Left ventricle myocardium inferior (tissue), 1 donor: ENCODE measurements at regions of chr5 and their contacts with region 1.

Region 1: GRCh38 chr5:59367791-59368394 is 525.6 kb downstream of the PDE4D start:
- DNase-seq: peak; percentile 26
- H3K4me3 ChIP-seq: no peak overlapping the region
- H3K27ac ChIP-seq: no peak overlapping the region
- H3K4me1 ChIP-seq: peaks cover 9% of the 10 kb centered on the region
- H3K27me3 ChIP-seq: no peaks in the 10 kb centered on the region
- CTCF ChIP-seq: peak; percentile 86

Region 2: DNA sequence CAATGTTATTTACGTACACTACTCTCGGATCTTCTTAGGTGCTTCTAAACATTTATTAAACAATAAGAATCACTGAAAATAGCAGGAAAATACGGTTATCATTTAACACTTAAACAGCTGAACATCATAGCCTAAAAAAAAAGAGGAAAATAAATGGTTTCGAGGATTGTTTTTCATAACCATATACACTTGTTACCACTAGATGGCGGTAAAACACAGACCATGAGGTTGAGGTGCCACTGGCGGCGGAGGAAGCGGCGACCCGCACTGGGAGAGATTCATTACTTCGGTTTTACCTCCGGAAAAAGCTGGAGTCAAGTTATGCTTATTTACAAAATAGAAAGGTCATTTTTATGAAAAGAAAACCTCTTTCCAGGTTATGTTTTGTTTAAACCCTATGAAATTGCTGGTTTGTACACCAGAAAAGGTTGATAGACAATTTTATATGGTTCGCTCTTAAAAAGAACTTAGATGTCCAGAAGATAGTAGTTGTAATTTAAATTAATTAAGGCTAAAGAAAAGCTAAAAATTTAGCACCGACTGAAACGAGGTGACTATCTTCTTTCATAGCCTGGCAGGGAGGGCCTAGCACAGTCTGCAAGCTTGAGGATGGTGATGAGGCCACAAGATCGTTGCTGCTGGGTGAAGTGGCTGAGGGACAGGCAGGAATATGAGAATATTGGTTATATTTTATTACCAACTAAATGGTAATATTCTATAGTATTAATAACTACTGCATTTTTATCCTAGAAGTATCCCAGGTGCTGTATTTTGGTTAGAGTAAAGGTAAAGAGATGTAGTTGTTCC is 179.3 kb before region 1 on chr5:
- intact Hi-C with region 1: loop called (anchors 5 kb)
- DNase-seq: peak; percentile 67
- H3K4me3 ChIP-seq: peak overlapping the region; percentile 55
- H3K27ac ChIP-seq: peak overlapping the region; percentile 59
- H3K4me1 ChIP-seq: peaks cover 31% of the 10 kb centered on the region
- H3K27me3 ChIP-seq: no peaks in the 10 kb centered on the region
- CTCF ChIP-seq: peak; percentile 86

Region 3: GRCh38 chr5:59222687-59223521 is 145.0 kb before region 1 on chr5:
- intact Hi-C with region 1: loop called (anchors 10 kb)
- DNase-seq: no peak
- H3K4me3 ChIP-seq: no peak overlapping the region
- H3K27ac ChIP-seq: peak overlapping the region; percentile 61
- H3K4me1 ChIP-seq: peaks cover 41% of the 10 kb centered on the region
- H3K27me3 ChIP-seq: no peaks in the 10 kb centered on the region
- CTCF ChIP-seq: no peak